Lower leg skin (tissue), 4 donors: ENCODE measurements at regions of chr1 and their contacts with region 1.

Region 1: GRCh38 chr1:93607814-93608186 is 73.8 kb downstream of the BCAR3 start:
- DNase-seq: peak in 1 of 2 donors; percentile 74
- H3K4me3 ChIP-seq: no peak overlapping the region
- CTCF ChIP-seq: no peak
- POLR2A ChIP-seq: no peak

Region 2: GRCh38 chr1:93463960-93464359 is 143.8 kb before region 1 on chr1:
- intact Hi-C with region 1: no loop called
- DNase-seq: no peak
- H3K4me3 ChIP-seq: no peak overlapping the region
- CTCF ChIP-seq: no peak
- POLR2A ChIP-seq: no peak

Region 3: GRCh38 chr1:93473968-93474720 is 133.7 kb before region 1 on chr1:
- intact Hi-C with region 1: no loop called
- DNase-seq: no peak
- H3K4me3 ChIP-seq: no peak overlapping the region
- CTCF ChIP-seq: no peak
- POLR2A ChIP-seq: no peak

Region 4: DNA sequence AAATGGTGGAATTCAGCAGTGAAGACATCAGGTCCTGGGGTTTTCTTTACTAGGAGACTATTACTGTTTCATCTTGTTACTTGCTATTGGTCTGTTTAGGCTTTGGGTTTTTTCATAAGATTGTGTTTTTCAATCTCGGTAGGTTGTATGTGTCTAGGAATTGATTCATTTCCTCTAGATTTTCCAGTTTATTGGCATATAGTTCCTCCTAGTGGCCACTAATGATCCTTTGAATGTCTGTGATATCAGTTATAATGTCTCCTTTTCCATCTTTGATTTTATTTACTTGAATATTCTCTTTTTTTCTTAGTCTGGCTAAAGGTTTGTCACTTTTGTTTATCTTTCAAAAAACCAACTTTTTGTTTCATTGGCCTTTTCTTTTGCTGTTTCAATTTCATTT is 1859.2 kb after region 1 on chr1:
- intact Hi-C with region 1: loop called (anchors 10 kb)
- DNase-seq: no peak
- H3K4me3 ChIP-seq: no peak overlapping the region
- CTCF ChIP-seq: no peak
- POLR2A ChIP-seq: no peak